Brain microvascular endothelial cell (primary cell): ENCODE measurements at regions of chr6 and their contacts with region 1.

Region 1: DNA sequence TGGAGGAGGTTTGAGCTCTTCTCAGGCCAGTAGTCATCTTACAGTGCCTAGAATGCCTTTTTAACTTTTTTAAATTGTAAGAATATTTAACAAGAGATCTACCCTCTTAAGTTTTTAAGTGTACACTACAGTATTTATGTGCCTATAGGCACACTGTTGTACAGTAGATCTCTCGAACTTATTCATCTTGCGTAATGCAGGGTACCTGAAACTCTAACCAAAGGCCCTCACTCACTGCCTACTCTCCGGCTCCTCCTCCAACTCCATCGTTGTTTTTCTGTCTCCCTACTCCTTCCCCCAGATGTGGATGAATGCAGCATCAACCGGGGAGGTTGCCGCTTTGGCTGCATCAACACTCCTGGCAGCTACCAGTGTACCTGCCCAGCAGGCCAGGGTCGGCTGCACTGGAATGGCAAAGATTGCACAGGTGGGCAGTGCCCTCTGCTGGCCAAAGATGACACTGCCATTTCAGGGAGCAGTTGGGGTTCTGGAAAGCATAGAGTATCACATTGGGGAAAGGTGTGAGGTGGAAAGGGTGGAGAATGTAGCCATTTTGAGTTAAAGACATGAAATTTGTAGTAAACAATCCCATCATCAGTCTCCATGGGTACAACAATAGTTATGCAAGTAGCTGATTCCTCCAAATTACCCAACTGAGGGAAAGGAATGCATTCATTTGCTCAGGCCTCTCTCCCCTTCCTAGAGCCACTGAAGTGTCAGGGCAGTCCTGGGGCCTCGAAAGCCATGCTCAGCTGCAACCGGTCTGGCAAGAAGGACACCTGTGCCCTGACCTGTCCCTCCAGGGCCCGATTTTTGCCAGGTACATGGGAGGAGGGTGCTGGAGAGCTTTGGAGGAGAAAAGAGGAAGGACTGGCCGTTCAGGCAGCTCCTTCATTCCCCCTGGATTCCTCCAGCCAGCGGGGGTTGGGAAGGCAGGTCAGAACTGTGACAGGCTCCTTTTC is 18.4 kb upstream of the ZNF76 start:
- DNase-seq: peak; percentile 46
- H3K4me3 ChIP-seq: no peak overlapping the region
- H3K27ac ChIP-seq: no peak overlapping the region
- H3K27me3 ChIP-seq: no peaks in the 10 kb centered on the region
- CTCF ChIP-seq: peak; percentile 99

Region 2: DNA sequence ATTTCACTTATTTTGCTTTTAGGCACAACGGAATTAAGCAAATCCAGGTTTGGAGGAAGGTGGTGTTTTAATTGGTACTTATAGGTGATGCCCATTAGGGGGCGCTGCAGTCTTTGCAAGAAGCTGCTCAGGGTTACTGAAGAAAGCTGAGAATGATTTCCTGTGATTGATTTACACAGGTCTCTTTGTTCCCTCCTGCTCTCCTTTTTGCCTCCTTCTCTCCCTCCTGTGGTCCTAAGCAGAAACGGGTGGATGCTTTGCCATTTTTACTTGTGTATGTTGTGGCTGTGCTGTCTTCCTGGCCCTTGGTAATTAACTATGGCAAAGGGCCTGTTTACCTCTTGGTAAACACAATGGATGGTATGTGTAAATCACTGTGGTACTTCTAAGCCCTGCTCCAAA is 254.3 kb before region 1 on chr6:
- in situ Hi-C with region 1: loop called (anchors 25 kb)
- DNase-seq: peak; percentile 65
- H3K4me3 ChIP-seq: no peak overlapping the region
- H3K27ac ChIP-seq: no peak overlapping the region
- H3K27me3 ChIP-seq: no peaks in the 10 kb centered on the region
- CTCF ChIP-seq: peak; percentile 80

Region 3: DNA sequence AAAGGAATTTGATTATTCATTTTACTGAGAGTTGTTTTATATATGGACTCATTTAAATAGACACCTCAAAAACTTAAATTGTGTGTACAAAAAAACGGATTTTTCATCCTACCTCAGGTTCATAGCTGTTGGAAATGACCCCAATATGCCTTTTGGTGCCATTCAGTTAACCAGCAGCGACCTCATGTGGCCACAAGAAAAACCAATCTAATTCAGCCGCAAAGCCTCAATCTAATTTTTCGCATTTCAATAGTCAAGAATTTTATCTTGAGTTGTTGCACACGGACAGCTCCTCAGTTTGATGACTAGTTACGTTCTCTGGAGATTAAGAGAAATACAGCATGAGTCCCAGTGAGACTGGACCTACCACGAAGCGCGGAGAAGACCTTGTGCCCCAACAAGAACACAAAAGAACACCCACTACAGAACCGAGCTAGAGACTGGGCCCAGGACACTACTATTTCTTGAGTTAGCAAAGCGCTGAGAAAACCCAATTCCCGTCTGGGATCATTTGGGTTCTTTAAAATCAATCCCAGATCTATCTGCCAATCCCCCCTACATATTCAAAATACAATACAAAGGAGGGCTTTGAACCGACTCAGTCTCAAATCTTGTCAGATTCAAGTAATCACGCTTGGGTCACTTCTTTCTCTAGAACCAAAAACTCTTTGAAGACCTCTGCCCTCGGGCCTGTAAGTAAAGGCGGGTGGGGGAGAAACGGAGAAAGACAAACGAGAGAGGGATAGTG is 101.0 kb before region 1 on chr6:
- in situ Hi-C with region 1: loop called (anchors 25 kb)
- DNase-seq: peak; percentile 57
- H3K4me3 ChIP-seq: no peak overlapping the region
- H3K27ac ChIP-seq: no peak overlapping the region
- H3K27me3 ChIP-seq: no peaks in the 10 kb centered on the region
- CTCF ChIP-seq: peak; percentile 82